ENCODE measurements at regions of chr12 and their contacts with region 1.

Region 1: DNA sequence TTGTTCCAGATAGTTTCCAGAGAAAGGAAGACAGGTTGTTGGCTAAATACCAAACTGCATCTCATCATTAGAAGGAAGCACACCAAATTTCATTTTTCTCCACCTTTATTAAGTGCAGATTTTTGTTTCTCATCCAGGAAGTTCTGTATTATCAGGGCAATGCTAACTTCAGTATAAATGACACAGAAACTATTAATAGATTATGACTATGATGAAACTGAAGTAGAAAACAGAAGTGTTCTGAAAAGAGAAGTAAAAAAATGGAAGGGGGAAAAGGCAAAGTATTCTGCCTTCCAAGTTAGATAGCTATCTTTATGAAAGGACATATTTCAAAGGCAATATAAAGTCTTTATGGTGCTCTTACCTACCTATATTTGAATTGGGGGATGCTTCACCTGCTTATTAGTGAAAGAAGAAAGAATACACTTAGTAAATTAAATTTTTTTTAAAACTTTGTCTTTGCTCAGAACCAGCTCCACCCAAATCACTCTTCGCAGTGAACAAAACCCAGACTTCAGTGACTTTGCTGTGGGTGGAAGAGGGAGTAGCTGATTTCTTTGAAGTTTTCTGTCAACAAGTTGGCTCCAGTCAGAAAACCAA is 223.9 kb downstream of the PTPRO start:
- DNase-seq: peak in 9 of 10 donors; percentile 30 to 84 (median 65)
- ATAC-seq: peak; percentile 96 to 98
- H3K4me3 Mint-ChIP-seq: peak overlapping the region; percentile 40 to 79 (median 70)
- H3K27ac Mint-ChIP-seq: peak overlapping the region; percentile 88 to 99 (median 94)
- H3K4me1 Mint-ChIP-seq: peaks cover 23 to 51% (median 49%) of the 10 kb centered on the region in 4 donors
- H3K27me3 Mint-ChIP-seq: no peaks in the 10 kb centered on the region

Region 2: GRCh38 chr12:15532364-15532977 is 13.7 kb before region 1 on chr12:
- POLR2A ChIA-PET with region 1: interaction called, 36 read pairs
- DNase-seq: peak; percentile 9 to 76 (median 52)
- ATAC-seq: peak; percentile 72 to 86
- H3K4me3 Mint-ChIP-seq: peak overlapping the region in 6 of 10 donors; percentile 7 to 70 (median 22)
- H3K27ac Mint-ChIP-seq: peak overlapping the region in 7 of 10 donors; percentile 37 to 90 (median 73)
- H3K4me1 Mint-ChIP-seq: peaks cover 0 to 18% (median 6%) of the 10 kb centered on the region in 4 donors
- H3K27me3 Mint-ChIP-seq: peaks cover 0 to 3% (median 0%) of the 10 kb centered on the region in 5 donors

Region 3: GRCh38 chr12:15563663-15564062 is 17.5 kb after region 1 on chr12:
- POLR2A ChIA-PET with region 1: interaction called, 49 read pairs
- DNase-seq: peak in 4 of 10 donors; percentile 9 to 49 (median 40)
- ATAC-seq: peak; percentile 82 to 92
- H3K4me3 Mint-ChIP-seq: peak overlapping the region; percentile 74 to 86 (median 83)
- H3K27ac Mint-ChIP-seq: peak overlapping the region; percentile 80 to 99 (median 93)
- H3K4me1 Mint-ChIP-seq: peaks cover 21 to 38% (median 34%) of the 10 kb centered on the region in 4 donors
- H3K27me3 Mint-ChIP-seq: no peaks in the 10 kb centered on the region